Transverse colon (tissue), 4 donors: ENCODE measurements at regions of chr2 and their contacts with region 1.

Region 1: DNA sequence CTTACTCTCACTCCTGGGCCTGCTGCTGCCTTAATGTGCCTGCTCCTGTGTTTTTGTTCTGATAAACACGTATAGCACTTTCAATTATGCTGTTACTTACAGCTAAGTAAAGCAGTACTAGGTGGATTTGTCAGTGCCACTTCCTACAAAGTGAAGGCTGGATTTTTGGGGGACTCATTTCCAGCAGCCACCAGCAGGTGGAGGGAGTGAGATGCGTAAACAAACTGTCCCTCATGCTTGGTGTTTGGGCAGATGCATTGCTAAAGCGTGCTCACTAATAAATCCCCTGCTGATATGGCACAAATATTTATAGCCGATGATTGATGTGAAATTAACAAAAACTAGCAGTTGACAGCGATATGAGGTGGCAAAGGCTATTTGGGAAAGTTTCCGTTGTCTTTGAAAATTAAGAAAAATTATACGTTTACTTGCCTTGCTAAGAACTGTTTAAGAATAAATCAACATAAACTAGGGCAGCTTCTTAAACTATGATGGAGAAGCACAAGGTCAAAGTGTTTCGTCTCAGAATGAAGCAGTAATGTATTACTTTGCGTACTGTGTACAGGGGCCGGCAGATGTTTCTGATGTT is 101.7 kb downstream of the AGAP1 start:
- DNase-seq: peak; percentile 76
- H3K4me3 ChIP-seq: no peak overlapping the region
- H3K27ac ChIP-seq: no peak overlapping the region
- H3K4me1 ChIP-seq: peaks cover 0 to 22% (median 4%) of the 10 kb centered on the region in 4 donors
- H3K27me3 ChIP-seq: no peaks in the 10 kb centered on the region
- CTCF ChIP-seq: peak; percentile 77 to 92 (median 83)
- EP300 ChIP-seq: no peak
- POLR2A ChIP-seq: no peak

Region 2: GRCh38 chr2:234081970-234082822 is 1513.3 kb before region 1 on chr2:
- in situ Hi-C with region 1: no loop called
- intact Hi-C with region 1: no loop called
- DNase-seq: peak; percentile 55
- H3K4me3 ChIP-seq: no peak overlapping the region
- H3K27ac ChIP-seq: no peak overlapping the region
- H3K4me1 ChIP-seq: peaks cover 0 to 5% (median 1%) of the 10 kb centered on the region in 4 donors
- H3K27me3 ChIP-seq: no peaks in the 10 kb centered on the region
- CTCF ChIP-seq: no peak
- EP300 ChIP-seq: no peak
- POLR2A ChIP-seq: no peak

Region 3: GRCh38 chr2:234550511-234551107 is 1044.9 kb before region 1 on chr2:
- in situ Hi-C with region 1: loop called in 2 of 4 experiments (anchors 25 kb)
- intact Hi-C with region 1: no loop called
- DNase-seq: peak; percentile 56
- H3K4me3 ChIP-seq: no peak overlapping the region
- H3K27ac ChIP-seq: no peak overlapping the region
- H3K4me1 ChIP-seq: no peaks in the 10 kb centered on the region
- H3K27me3 ChIP-seq: peaks cover 5% of the 10 kb centered on the region
- CTCF ChIP-seq: peak; percentile 87 to 95 (median 90)
- EP300 ChIP-seq: no peak
- POLR2A ChIP-seq: no peak

Region 4: GRCh38 chr2:235142601-235143000 is 452.9 kb before region 1 on chr2:
- in situ Hi-C with region 1: loop called in 2 of 4 experiments (anchors 5 to 10 kb)
- intact Hi-C with region 1: loop called (anchors 5 kb)
- DNase-seq: peak; percentile 70
- H3K4me3 ChIP-seq: no peak overlapping the region
- H3K27ac ChIP-seq: peak overlapping the region; percentile 78 to 81 (median 80)
- H3K4me1 ChIP-seq: peaks cover 2 to 39% (median 12%) of the 10 kb centered on the region in 4 donors
- H3K27me3 ChIP-seq: no peaks in the 10 kb centered on the region
- CTCF ChIP-seq: no peak
- EP300 ChIP-seq: no peak
- POLR2A ChIP-seq: no peak

Region 5: DNA sequence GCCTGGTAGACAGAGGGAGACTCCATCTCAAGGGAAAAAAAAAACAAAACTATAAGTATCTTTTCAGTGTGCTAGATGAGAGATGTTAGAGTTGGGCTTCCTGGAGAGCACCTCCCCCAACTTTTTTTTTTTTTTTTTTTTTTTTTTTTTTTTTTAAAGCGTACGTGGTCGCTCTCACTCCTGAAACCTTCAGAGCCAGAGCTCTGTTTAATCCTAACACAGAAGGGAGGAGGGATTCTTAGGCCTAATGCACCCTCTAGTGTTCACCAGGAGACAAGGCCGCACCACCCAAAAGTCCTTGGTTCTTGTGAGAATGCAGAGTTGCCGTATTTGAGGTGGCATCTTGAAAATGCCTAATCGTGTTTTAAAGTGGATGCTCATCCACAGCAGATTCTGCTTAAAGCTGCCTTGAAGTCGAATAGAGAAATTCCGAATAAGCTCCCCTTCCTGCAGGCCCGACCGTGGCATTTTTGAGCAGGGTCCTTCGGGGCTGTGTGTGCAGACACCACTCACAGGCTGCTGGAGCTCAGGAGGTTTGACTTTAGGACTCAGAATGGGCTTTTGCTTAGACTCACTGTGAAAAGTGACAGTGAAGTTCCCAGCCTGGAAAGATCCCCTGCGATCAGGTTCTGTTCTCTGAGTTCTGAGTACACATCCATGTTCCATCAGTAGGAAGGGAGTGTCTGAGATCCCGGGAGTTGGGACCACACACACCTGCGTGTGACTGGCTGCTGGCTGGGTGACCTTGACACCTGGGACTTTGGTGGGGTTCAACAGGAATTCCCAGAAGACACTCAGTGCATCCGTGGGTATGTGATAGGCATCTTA is 151.0 kb after region 1 on chr2:
- in situ Hi-C with region 1: loop called (anchors 10 kb)
- intact Hi-C with region 1: loop called (anchors 5 kb)
- DNase-seq: peak; percentile 68
- H3K4me3 ChIP-seq: no peak overlapping the region
- H3K27ac ChIP-seq: peak overlapping the region in 1 of 4 donors; percentile 51
- H3K4me1 ChIP-seq: peaks cover 0 to 10% (median 3%) of the 10 kb centered on the region in 4 donors
- H3K27me3 ChIP-seq: no peaks in the 10 kb centered on the region
- CTCF ChIP-seq: peak; percentile 71 to 79 (median 76)
- EP300 ChIP-seq: no peak
- POLR2A ChIP-seq: no peak

Region 6: DNA sequence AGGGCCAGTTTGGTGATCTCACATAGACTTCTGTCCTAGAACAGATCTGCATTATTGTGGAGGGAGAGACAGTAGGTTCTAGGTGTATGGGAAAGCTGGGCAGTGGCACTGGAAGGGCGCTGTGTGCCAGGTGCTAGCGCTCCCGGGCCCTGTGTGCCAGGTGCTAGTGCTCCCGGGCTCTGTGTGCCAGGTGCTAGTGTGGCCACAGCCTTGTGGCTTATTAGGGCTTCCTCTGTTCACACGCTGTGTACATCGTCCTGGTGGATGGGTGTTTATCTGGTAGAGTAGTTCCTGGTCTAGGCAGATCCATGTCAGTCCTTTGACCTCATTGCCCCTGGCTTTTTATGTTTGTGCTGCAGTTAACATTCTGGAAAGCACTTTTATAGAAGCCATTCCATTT is 161.7 kb after region 1 on chr2:
- in situ Hi-C with region 1: no loop called
- intact Hi-C with region 1: no loop called
- DNase-seq: no peak
- H3K4me3 ChIP-seq: no peak overlapping the region
- H3K27ac ChIP-seq: no peak overlapping the region
- H3K4me1 ChIP-seq: peaks cover 0 to 4% (median 0%) of the 10 kb centered on the region in 4 donors
- H3K27me3 ChIP-seq: no peaks in the 10 kb centered on the region
- CTCF ChIP-seq: no peak
- EP300 ChIP-seq: no peak
- POLR2A ChIP-seq: no peak